ENCODE measurements at regions of chr1 and their contacts with region 1.

Region 1: DNA sequence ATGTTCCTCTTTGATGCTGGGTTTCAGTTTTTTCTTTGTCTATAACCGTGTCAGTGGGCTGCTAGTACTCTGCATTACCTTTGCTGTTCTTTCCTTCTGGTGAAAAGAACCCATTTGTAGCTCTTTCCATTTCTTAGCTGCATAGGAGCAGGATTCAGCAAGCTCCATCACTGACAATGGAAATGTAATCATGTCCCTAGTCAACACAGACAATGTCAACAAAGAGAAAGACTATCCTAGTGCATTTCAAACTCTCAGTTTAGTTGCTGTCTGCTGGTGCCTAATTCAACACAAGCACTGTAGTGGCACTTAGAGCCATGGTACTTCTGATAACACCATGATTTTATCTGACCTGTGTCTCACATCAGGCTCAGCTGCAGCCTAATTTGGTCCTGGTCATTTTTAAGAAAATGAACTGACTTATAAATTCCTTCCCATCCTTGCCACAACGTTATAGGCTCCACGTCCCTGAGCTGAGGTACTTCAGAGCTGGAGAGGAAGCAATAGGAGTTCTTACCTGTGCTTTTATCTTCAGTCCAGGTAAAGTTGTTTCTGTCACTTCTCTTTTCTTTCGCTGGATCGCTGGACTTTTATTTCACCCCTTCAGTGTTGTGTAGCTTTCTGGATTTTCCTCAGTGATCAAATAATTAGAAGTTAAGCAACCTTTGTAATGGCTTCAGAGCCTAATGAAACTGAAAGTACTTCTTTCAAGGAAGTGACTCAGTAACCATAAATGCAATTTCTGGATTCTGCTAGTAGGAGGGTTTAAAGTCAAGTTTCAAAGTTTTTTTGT is at the start of gene GBP3:
- DNase-seq: no peak
- ATAC-seq: peak; percentile 80 to 84
- total RNA-seq, gene GBP3: 8.2 to 11.1 TPM

Region 2: DNA sequence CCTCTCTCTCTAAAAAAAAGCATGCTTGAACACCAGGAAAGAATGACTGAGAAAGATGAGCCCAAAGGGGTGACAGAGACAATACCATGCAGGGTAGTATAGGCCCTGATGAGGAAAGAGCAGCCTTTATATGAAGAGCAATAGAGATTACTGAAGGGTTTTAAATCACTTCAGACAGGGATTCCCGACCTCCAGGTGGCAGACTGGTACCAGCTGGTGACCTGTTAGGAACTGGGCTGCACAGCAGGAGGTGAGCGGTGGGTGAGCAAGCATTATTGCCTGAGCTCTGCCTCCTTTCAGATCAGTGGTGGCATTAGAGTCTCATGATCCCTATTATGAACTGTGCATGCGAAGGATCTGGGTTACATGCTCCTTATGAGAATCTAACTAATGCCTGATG is 100.1 kb before region 1 on chr1:
- intact Hi-C with region 1: no loop called
- DNase-seq: no peak
- ATAC-seq: no peak

Region 3: GRCh38 chr1:89064632-89065031 is 42.3 kb after region 1 on chr1:
- intact Hi-C with region 1: loop called in 1 of 2 experiments (anchors 5 kb)
- DNase-seq: no peak
- ATAC-seq: peak; percentile 36 to 60

Measured in left cardiac atrium (tissue), 4 donors.